ENCODE measurements at regions of chr7 and their contacts with region 1.

Region 1: DNA sequence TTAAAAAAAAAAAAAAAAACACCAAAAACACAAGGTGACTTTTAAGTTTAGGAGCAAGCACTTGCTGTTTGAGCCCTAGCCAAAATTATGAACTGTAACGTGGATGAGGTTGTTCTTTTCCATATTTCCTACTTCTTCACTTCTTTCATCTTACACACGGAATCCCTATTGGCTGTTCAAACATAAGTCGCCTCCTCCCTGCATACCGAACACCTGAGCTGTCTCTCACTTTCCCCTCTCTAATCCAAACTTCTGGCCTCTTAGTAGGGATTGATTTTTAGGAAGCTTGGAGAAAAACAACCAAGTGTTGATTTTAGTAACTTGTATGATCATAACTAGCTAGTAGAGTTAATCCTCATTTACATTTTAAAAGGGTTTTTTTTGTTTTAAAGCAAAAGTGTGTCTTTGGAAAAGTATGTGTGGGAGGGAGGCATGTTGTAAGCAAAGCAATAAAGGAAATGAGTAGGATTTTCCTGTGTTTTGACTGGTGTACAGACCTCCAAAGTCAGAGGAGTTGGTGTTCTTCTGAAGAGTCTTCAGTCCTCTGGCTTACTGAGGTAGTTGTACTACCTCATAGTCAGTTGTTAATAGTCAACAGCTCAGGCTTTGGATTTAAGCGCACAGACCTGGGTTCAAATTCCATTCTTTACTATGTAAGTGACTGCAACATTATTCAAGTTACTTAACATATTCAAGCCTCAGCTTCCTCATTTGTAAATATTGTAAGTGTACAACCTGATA is 39.3 kb downstream of the RABGEF1 start:
- DNase-seq: no peak
- CTCF ChIP-seq: no peak

Region 2: DNA sequence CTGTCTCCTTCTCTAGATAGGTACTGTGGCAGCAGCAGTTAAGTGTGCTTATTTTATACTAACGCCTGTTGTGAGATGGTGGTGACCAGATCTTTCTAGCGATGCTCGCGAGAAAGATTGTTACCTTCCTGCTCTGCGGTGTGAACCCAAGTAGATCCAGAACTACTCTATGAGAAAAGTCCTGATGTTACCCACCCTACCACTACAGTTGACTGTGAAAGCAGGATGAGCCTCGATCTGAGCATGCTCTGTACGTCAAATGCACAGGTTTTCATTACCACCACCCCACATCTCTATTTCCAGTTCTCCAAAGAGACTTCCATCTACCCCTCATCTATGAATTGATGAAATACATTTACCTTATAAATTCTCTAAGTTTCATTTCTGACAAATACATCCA is 215.8 kb before region 1 on chr7:
- in situ Hi-C with region 1: loop called (anchors 5 kb)
- DNase-seq: no peak
- CTCF ChIP-seq: no peak

Measured in GM13976 (cell line).